Psoas muscle (tissue), 8 donors: ENCODE measurements at regions of chr13 and their contacts with region 1.

Region 1: GRCh38 chr13:24011268-24011667 is 114.0 kb upstream of the C1QTNF9B start:
- DNase-seq: no peak
- ATAC-seq: no peak
- H3K4me3 ChIP-seq: no peak overlapping the region
- H3K27ac ChIP-seq: no peak overlapping the region
- H3K4me1 ChIP-seq: no peaks in the 10 kb centered on the region
- H3K27me3 ChIP-seq: peaks cover 0 to 3% (median 0%) of the 10 kb centered on the region in 3 donors
- CTCF ChIP-seq: no peak

Region 2: DNA sequence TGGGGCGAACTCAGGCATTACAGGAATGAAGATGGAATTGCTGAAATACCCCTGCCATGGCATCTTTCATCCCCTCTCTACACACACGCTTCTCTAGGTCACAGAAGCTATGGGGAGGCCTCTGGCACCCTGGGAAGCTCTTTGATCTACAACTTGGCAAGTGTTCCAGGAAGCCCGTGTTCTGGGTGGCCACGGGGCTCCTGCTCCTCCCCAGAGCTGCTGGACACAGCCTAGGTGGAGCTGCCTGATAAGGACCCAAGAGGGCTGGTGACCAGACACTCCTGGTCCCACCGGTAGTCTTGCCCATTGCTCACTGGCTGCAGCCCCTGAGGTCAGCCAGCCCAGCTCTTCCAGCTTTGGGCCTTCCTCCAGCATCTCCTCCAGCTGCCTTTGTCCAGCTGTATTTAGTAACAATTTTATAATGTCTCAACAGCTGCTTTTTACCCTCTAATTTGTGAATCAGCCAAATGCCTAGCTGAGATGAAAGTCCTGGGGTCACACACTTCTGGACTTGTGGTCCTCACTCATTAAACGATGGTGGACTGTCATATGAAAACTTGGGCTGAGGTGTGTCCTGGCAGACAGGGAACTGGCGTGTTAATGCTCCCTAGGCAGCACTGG is 76.4 kb after region 1 on chr13:
- intact Hi-C with region 1: loop called in 1 of 2 experiments (anchors 2 kb)
- DNase-seq: no peak
- ATAC-seq: peak in 1 of 4 donors; percentile 29
- H3K4me3 ChIP-seq: no peak overlapping the region
- H3K27ac ChIP-seq: no peak overlapping the region
- H3K4me1 ChIP-seq: no peaks in the 10 kb centered on the region
- H3K27me3 ChIP-seq: peaks cover 0 to 3% (median 0%) of the 10 kb centered on the region in 3 donors
- CTCF ChIP-seq: no peak